Activated naive CD4-positive, alpha-beta T cell treated with anti-CD3 and anti-CD28 coated beads for 36 hours (primary cell): ENCODE measurements at regions of chr2 and their contacts with region 1.

Region 1: DNA sequence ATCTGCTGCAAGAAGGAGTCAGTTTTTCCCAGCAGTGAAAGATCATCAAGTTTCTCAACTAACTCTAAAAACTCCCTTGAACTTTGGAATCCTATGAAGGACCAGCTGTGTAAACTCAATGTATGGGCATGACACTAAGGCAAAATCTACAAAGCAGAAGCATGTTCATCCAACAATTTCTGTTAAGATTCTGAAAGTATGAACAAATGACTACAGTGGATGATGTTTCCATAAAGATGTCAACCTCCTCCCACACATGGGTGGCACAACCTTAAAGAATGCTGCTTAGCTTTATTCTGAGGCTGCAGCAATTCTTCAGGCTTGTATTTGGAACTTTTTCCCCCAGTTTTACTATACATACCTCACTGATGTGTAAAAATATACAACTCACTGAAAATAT is 47.2 kb downstream of the WDR33 start:
- DNase-seq: no peak
- H3K4me3 Mint-ChIP-seq: no peak overlapping the region
- H3K27ac Mint-ChIP-seq: no peak overlapping the region
- H3K4me1 Mint-ChIP-seq: peaks cover 6% of the 10 kb centered on the region
- H3K27me3 Mint-ChIP-seq: no peaks in the 10 kb centered on the region

Region 2: GRCh38 chr2:127675331-127676261 is 88.2 kb before region 1 on chr2 and contains the start of gene LIMS2:
- CTCF ChIA-PET with region 1: no interaction called
- intact Hi-C with region 1: no loop called
- DNase-seq: no peak
- H3K4me3 Mint-ChIP-seq: peak within 1 kb of the TSS; percentile 54
- H3K27ac Mint-ChIP-seq: no peak within 1 kb of the TSS
- H3K4me1 Mint-ChIP-seq: peaks cover 10% of the 10 kb centered on the region
- H3K27me3 Mint-ChIP-seq: peaks cover 43% of the 10 kb centered on the region
- total RNA-seq, gene LIMS2: 14.6 to 15.5 TPM

Region 3: DNA sequence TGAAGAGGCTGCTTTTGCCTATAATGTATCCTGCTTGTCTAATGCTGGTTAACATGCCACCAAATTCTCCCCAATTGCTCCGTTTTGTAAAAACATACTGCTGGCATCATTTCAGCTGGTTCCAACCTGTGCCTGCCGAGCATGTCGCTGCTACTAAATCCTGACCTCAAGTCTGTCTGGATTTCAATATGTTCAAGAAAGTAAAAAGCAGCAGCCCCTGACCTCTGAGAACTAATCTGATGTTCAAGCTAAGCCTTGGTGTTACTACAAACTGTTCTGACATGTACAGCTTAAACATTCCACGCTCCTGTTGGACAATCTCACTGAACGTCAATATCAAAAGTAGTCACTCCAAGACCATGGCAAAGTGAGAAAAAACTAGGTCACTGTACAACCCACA is 16.2 kb before region 1 on chr2:
- CTCF ChIA-PET with region 1: interaction called, 3 read pairs
- intact Hi-C with region 1: loop called (anchors 2 kb)
- DNase-seq: no peak
- H3K4me3 Mint-ChIP-seq: no peak overlapping the region
- H3K27ac Mint-ChIP-seq: no peak overlapping the region
- H3K4me1 Mint-ChIP-seq: peaks cover 25% of the 10 kb centered on the region
- H3K27me3 Mint-ChIP-seq: no peaks in the 10 kb centered on the region